ENCODE measurements at regions of chr10 and their contacts with region 1.

Region 1: DNA sequence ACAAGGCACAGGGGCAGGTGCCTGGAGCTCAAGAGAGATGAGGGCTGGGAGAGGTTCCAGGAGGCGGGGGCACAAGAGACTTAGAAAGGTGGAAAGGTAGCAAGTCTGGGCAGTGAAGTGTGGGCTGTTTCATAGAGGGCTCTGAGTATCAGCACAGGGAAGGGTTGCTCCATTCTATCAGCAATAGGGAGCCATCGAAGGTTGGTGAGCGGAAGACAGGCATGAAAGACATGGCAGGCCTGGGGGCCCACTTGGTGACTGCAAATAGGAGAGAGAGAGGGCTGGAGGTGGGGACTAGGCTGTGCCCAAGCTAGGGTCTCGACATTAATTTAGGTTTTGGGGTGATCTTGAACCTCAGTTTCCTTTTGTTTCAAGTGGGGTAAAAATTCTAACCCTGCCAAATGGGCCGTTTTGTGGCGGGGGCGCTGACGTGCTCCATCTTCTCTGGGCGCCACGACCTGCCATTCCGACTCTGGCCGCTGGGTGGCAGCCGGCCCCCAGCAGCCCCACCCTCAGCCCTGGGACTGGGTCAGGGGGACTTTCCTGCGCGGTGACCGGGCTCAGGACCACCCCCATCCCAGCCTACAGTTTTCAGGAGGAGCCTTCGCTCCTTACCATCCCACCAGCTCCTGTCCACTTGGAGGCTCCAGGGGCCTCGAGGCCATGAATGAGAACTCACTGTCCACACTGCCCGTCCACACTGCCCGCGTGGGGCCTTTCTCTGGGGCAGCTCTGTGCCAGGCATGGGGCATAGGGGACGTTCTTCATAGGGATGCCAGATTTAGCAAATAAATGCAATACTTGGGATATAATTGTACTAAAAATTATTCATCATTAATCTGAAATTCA is 37.2 kb upstream of the PCBD1 start:
- DNase-seq: peak; percentile 92
- H3K4me3 ChIP-seq: peak overlapping the region in 1 of 2 experiments; percentile 32; a peak in 1 of 4 replicates
- H3K27ac ChIP-seq: no peak overlapping the region
- H3K4me1 ChIP-seq: peaks cover 5 to 19% of the 10 kb centered on the region in 2 experiments; a peak in 2 of 4 replicates
- H3K27me3 ChIP-seq: peaks cover 13% of the 10 kb centered on the region; the same call in 1 of the 2 replicates
- CTCF ChIP-seq: peak; percentile 89
- EP300 ChIP-seq: no peak
- RAD21 ChIP-seq: peak; percentile 89

Region 2: GRCh38 chr10:70913191-70913892 is 12.3 kb before region 1 on chr10:
- CTCF ChIA-PET with region 1: interaction called, 30 read pairs
- POLR2A ChIA-PET with region 1: no interaction called
- DNase-seq: peak; percentile 27
- H3K4me3 ChIP-seq: no peak overlapping the region
- H3K27ac ChIP-seq: no peak overlapping the region; a peak in 1 of 4 replicates
- H3K4me1 ChIP-seq: peaks cover 0 to 12% of the 10 kb centered on the region in 2 experiments; a peak in 1 of 4 replicates
- H3K27me3 ChIP-seq: peaks cover 25% of the 10 kb centered on the region
- CTCF ChIP-seq: no peak
- EP300 ChIP-seq: no peak
- RAD21 ChIP-seq: no peak

Region 3: GRCh38 chr10:71010730-71011129 is 85.1 kb after region 1 on chr10:
- CTCF ChIA-PET with region 1: interaction called, 16 read pairs
- POLR2A ChIA-PET with region 1: no interaction called
- DNase-seq: no peak
- H3K4me3 ChIP-seq: no peak overlapping the region
- H3K27ac ChIP-seq: no peak overlapping the region
- H3K4me1 ChIP-seq: peaks cover 0 to 14% of the 10 kb centered on the region in 2 experiments; a peak in 2 of 4 replicates
- H3K27me3 ChIP-seq: no peaks in the 10 kb centered on the region; the same call in 1 of the 2 replicates
- CTCF ChIP-seq: no peak
- EP300 ChIP-seq: no peak
- RAD21 ChIP-seq: peak; percentile 52

Region 4: DNA sequence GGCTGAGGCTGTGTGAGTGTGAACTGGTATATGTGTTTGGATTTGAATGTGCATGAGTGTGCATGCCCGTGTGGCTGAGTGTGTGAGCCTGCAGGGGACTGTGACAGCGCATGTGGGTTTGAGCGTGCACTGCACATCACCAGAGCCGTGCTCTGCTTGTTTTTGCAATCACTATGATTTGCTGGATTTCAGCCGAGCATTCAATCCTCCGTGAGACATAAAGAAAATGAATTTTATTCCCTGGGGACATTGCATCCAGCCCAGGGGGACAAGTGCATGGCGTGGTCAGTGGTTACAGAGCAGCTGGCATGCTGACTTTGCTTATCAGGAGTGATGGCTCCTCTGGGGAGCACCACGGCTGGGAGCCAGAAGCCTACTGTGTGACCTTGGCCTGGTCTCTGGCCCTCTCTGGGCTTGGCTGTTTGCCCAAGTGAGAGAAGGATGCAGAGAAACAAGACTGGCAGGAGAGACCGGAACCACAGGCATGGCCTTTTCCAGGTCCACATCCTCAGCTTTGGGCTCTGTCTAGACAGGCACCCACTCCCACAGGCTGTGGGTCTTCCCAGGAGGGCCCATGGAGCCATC is 126.6 kb after region 1 on chr10:
- CTCF ChIA-PET with region 1: interaction called, 11 read pairs
- POLR2A ChIA-PET with region 1: no interaction called
- DNase-seq: no peak
- H3K4me3 ChIP-seq: no peak overlapping the region
- H3K27ac ChIP-seq: no peak overlapping the region
- H3K4me1 ChIP-seq: no peaks in the 10 kb centered on the region; a peak in 1 of 4 replicates
- H3K27me3 ChIP-seq: peaks cover 17% of the 10 kb centered on the region; the same call in 1 of the 2 replicates
- CTCF ChIP-seq: no peak
- EP300 ChIP-seq: no peak
- RAD21 ChIP-seq: no peak

Region 5: GRCh38 chr10:71205468-71205867 is 279.9 kb after region 1 on chr10:
- CTCF ChIA-PET with region 1: interaction called, 62 read pairs
- POLR2A ChIA-PET with region 1: no interaction called
- DNase-seq: no peak
- H3K4me3 ChIP-seq: no peak overlapping the region
- H3K27ac ChIP-seq: no peak overlapping the region
- H3K4me1 ChIP-seq: peaks cover 0 to 41% of the 10 kb centered on the region in 2 experiments; a peak in 2 of 4 replicates
- H3K27me3 ChIP-seq: peaks cover 7% of the 10 kb centered on the region; the same call in 1 of the 2 replicates
- CTCF ChIP-seq: no peak
- EP300 ChIP-seq: no peak
- RAD21 ChIP-seq: no peak

Region 6: GRCh38 chr10:71270301-71271220 is 345.0 kb after region 1 on chr10:
- CTCF ChIA-PET with region 1: interaction called, 29 read pairs
- POLR2A ChIA-PET with region 1: no interaction called
- DNase-seq: peak; percentile 72
- H3K4me3 ChIP-seq: no peak overlapping the region; a peak in 1 of 4 replicates
- H3K27ac ChIP-seq: peak overlapping the region; percentile 68 to 96; a peak in 3 of 4 replicates
- H3K4me1 ChIP-seq: peaks cover 54 to 90% of the 10 kb centered on the region in 2 experiments
- H3K27me3 ChIP-seq: no peaks in the 10 kb centered on the region
- CTCF ChIP-seq: peak; percentile 65
- EP300 ChIP-seq: no peak
- RAD21 ChIP-seq: peak; percentile 77

Region 7: GRCh38 chr10:71293446-71294084 is 368.0 kb after region 1 on chr10:
- CTCF ChIA-PET with region 1: interaction called, 12 read pairs
- POLR2A ChIA-PET with region 1: no interaction called
- DNase-seq: no peak
- H3K4me3 ChIP-seq: no peak overlapping the region
- H3K27ac ChIP-seq: peak overlapping the region in 1 of 2 experiments; percentile 43; a peak in 1 of 4 replicates
- H3K4me1 ChIP-seq: peaks cover 0 to 15% of the 10 kb centered on the region in 2 experiments; a peak in 1 of 4 replicates
- H3K27me3 ChIP-seq: no peaks in the 10 kb centered on the region
- CTCF ChIP-seq: no peak
- EP300 ChIP-seq: no peak
- RAD21 ChIP-seq: no peak